ENCODE measurements at regions of chr20 and their contacts with region 1.

Region 1: DNA sequence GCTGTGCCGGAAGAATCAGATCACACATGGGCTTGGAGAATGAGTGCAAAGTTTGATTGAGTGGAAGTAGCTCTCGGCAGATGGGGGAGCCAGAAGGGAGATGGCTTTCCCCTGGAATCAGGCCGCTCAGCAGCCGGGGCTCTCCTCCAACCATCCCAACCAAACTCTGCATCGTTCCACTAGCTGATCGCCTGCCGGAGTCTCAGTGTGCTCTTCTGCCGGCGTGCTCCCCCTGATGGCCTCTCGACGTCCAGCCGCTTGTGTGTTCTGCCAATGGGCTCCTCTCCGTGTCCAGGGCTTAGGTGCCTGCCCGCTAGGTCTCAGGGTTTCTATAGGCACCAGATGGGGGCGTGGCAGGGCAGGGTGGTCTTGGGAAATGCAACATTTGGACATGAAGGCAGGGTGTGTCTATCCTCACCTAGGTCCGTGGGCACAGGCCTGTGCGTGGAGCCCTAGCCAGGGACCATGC is 4.9 kb upstream of the BIRC7 start:
- DNase-seq: no peak
- H3K4me3 ChIP-seq: no peak overlapping the region
- H3K27ac ChIP-seq: peak overlapping the region; percentile 2
- H3K27me3 ChIP-seq: no peaks in the 10 kb centered on the region
- CTCF ChIP-seq: peak; percentile 72

Region 2: GRCh38 chr20:63216041-63216848 is 14.6 kb before region 1 on chr20 and contains the start of gene YTHDF1:
- CTCF ChIA-PET with region 1: interaction called, 59 read pairs
- POLR2A ChIA-PET with region 1: no interaction called
- DNase-seq: peak; percentile 68
- H3K4me3 ChIP-seq: peak within 1 kb of the TSS; percentile 77
- H3K27ac ChIP-seq: peak within 1 kb of the TSS; percentile 31
- H3K27me3 ChIP-seq: peaks cover 12% of the 10 kb centered on the region
- CTCF ChIP-seq: no peak
- polyA plus RNA-seq, gene YTHDF1: 22.3 and 22.4 TPM in 2 replicates

Region 3: DNA sequence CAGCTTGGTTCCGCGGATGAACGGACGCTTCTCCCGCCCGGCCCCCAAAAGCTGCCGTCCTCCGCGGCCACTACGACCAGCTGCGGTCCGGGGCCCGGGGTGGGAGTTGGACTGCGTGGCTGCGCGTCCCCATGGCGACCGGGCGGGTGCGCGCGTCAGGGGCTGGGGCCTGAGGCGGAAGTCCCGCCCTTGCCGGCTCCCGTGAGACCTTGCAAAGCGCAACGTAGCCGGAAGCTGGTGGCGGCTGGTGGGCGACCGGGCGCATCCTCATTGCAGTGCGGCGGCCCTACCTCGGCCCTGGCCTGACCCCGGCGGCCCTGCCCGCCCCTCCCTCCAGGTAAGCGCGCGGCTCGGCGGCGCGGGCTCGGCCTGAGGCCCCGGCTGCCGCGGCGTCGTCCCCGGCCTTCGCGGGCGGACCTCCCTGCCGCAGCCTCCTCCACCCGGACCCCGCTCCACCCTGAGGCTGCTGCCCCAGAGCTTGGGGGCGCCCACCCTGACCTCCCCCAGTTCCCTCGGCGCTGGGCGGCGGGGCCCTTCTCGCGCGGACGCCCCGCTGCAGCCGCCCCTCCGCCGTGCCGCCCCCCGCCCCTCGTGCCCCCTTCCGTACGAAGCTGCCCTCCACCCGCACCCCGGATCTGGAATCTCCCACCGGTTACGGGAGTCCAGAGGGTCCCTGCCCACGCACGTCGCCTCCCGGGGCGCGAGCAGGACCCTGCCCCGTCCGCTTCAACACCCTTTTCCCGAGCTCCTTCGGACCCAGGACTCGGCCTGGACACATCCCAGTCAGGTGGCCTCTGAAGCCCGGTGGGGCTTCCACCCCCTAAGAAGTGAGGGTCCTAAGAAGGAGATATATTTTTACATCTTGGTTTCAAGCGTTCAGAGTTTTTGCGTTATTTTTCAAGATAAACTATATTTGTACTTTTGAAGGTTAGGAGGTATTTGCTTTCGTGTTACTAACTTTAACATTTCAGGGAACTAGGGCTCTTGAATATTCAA is 42.0 kb after region 1 on chr20 and contains the start of gene ARFGAP1:
- CTCF ChIA-PET with region 1: interaction called, 4 read pairs
- POLR2A ChIA-PET with region 1: interaction called, 11 read pairs
- DNase-seq: peak; percentile 60
- H3K4me3 ChIP-seq: peak within 1 kb of the TSS; percentile 87
- H3K27ac ChIP-seq: peak within 1 kb of the TSS; percentile 52
- H3K27me3 ChIP-seq: peaks cover 2% of the 10 kb centered on the region
- CTCF ChIP-seq: no peak
- polyA plus RNA-seq, gene ARFGAP1: 52.6 and 70.9 TPM in 2 replicates

Measured in AG04450 (cell line).